Ovary (tissue), 10 donors: ENCODE measurements at regions of chr3 and their contacts with region 1.

Region 1: DNA sequence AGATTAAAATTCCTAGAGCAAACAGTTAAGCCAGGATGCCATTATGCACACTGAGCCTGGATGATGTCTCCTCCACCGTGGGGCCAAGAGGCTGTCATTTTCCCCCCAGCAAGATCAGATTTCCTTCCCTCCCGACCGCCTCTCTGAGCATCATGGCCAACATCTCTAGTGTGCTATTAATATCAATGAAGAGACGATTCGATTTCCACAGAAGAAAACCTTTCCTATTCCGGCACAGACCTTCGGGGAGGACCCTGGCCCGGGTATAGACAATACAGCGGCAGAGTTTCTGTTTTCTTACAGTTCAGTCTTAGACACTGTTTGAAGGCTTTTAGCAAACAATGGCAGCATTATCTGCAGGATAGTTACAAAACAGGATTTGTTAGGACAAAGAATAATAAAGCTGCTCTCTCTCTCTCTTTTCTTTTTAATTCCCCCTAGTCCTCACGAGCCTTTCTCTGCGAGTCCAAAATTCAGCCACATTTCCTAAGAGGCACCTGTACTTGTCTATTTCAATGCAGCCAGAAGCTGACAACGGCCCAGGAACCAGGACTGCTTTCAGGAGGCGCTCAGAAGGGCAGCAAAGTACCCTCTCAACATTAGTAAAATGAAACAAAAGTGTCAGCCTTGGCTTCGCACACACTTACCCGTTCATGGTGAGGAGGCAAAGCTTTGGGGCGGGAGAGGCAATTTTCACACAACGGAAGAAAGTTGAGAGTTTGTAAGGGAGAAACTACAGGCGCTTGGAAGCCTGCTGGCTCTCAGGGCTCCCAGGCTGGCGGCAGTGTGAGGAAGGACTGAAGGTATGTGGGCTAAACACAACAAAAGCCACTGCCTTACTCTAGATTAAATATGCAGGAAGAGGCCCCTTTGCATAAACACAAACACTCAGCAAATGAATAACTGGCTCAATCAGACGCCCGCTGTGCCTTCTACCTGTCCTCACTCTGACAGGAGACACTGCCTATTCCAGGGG is 278.0 kb downstream of the FOXP1 start:
- DNase-seq: peak in 3 of 5 donors; percentile 22 to 39 (median 25)
- H3K4me3 ChIP-seq: peak overlapping the region; percentile 25
- H3K27ac ChIP-seq: peak overlapping the region; percentile 8 to 55
- H3K4me1 ChIP-seq: peaks cover 4% of the 10 kb centered on the region
- H3K27me3 ChIP-seq: no peaks in the 10 kb centered on the region
- CTCF ChIP-seq: no peak
- EP300 ChIP-seq: no peak
- POLR2A ChIP-seq: no peak

Region 2: GRCh38 chr3:70716832-70717231 is 588.7 kb before region 1 on chr3:
- intact Hi-C with region 1: loop called in 1 of 4 experiments (anchors 5 kb)
- DNase-seq: peak; percentile 8 to 39 (median 27)
- H3K4me3 ChIP-seq: no peak overlapping the region
- H3K27ac ChIP-seq: no peak overlapping the region
- H3K4me1 ChIP-seq: no peaks in the 10 kb centered on the region
- H3K27me3 ChIP-seq: no peaks in the 10 kb centered on the region
- CTCF ChIP-seq: peak in 2 of 3 donors; percentile 24 to 59
- EP300 ChIP-seq: no peak
- POLR2A ChIP-seq: no peak

Region 3: GRCh38 chr3:71355862-71356261 is 50.3 kb after region 1 on chr3:
- intact Hi-C with region 1: loop called in 1 of 4 experiments (anchors 2 kb)
- DNase-seq: no peak
- H3K4me3 ChIP-seq: no peak overlapping the region
- H3K27ac ChIP-seq: no peak overlapping the region
- H3K4me1 ChIP-seq: no peaks in the 10 kb centered on the region
- H3K27me3 ChIP-seq: no peaks in the 10 kb centered on the region
- CTCF ChIP-seq: no peak
- EP300 ChIP-seq: no peak
- POLR2A ChIP-seq: no peak